Activated CD8-positive, alpha-beta memory T cell treated with anti-CD3 and anti-CD28 coated beads, Interleukin-2, amount 10 ng/mL, durations not matched to agents 7 days and 5 days (primary cell): ENCODE measurements at regions of chr1 and their contacts with region 1.

Region 1: DNA sequence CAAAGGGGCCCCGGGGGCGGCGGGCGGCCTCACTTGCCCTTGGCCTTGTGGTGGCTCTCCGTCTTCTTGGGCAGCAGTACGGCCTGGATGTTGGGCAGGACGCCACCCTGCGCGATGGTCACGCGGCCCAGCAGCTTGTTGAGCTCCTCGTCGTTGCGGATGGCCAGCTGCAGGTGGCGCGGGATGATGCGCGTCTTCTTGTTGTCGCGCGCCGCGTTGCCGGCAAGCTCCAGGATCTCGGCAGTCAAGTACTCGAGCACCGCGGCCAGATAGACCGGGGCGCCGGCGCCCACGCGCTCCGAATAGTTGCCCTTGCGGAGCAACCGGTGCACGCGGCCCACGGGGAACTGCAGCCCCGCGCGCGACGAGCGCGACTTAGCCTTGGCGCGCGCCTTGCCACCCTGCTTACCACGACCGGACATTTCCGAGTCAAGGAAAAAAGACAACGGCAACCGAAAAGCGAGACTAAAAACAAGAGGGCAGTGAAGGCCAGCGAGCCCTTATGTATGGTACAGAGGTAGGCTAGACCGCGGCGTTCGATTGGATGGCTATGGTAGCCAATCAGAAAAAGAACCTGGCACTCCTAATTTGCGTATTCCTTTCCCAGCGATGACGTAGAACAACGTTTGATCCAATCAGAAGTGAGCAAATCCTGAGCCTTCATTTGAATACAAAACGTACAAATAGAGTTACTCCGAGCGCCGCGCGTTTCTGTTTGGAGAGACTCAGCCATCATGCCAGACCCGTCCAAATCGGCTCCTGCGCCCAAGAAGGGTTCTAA is 29.6 kb upstream of the RNF187 start:
- DNase-seq: peak; percentile 95
- ATAC-seq: peak; percentile 83
- H3K4me3 Mint-ChIP-seq: peak overlapping the region; percentile 96
- H3K27ac Mint-ChIP-seq: peak overlapping the region; percentile 99
- H3K4me1 Mint-ChIP-seq: peaks cover 56% of the 10 kb centered on the region
- H3K27me3 Mint-ChIP-seq: no peaks in the 10 kb centered on the region

Region 2: DNA sequence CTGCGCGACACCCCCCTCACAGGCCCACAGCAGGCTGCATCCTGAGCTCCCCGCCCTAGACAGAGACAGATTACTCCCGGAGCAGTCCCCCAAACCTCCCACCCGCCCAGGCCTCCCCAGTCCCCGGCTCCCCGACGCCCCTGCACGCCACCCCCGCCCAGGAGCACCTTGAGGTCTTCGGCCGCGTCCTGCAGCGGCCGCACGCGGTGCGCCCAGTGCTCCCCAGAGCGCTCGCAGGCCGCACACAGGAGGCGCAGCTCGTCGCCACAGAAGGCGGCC is 51.7 kb before region 1 on chr1:
- CTCF ChIA-PET with region 1: interaction called, 44 read pairs
- DNase-seq: peak; percentile 52
- ATAC-seq: peak; percentile 14
- H3K4me3 Mint-ChIP-seq: peak overlapping the region; percentile 98
- H3K27ac Mint-ChIP-seq: peak overlapping the region; percentile 83
- H3K4me1 Mint-ChIP-seq: peaks cover 52% of the 10 kb centered on the region
- H3K27me3 Mint-ChIP-seq: no peaks in the 10 kb centered on the region

Region 3: DNA sequence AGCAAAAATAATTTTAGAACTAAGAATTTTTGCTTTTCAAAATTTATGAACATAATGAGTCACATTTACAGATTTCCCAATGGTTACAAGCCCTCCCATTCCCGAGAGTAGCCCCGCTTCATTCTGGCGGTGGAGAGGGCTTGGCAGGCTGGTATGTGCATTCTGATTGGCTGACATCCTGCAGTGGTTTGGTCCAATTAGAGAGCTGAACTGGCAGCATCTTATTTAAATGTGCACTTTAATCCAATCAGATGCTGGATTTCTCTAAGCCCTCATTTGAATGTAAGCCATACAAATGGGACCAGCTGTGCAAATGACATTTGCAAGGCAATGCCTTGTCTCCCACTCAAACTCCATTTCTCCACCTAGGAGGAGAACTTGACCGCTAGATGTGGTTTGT is 22.9 kb before region 1 on chr1:
- CTCF ChIA-PET with region 1: no interaction called
- DNase-seq: no peak
- ATAC-seq: no peak
- H3K4me3 Mint-ChIP-seq: no peak overlapping the region
- H3K27ac Mint-ChIP-seq: no peak overlapping the region
- H3K4me1 Mint-ChIP-seq: no peaks in the 10 kb centered on the region
- H3K27me3 Mint-ChIP-seq: peaks cover 38% of the 10 kb centered on the region

Region 4: DNA sequence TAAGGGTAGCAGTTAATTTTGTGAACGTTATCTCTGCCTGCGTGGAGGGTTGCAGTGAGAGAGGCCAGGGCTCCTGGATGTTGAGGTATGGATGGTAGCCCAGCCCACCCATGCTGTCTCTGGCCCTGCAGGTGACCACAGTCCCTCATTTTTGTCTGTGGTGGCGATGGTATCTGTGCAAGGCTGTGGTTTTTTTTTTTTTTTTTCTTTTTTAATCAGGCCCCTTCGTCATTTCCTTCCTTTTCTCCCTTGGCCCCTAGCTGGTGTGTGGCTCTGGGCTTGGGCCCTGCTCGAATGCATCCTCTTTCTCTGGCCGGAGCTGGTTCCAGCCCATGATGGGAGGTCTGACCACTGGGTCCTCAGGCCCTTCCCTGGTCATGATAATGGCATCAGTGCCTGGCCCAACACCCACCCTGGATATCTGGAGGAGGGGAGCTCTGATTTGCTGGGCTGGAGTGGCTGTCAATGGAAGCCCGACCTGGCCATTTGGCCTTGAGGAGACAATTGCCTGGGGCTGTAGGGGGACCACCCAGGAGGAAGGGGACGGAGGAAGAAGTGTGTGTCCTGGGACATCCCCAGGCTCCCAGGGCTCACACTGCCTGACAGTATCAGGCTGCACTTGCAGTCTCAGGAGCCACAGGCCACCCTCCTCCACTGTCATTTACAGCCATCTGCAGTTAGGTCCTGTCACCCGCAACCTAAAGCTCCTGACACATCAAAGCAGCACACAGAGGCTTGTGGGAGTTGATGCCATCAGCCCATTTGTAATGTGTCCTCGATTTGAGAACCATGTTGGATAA is 21.5 kb after region 1 on chr1:
- CTCF ChIA-PET with region 1: interaction called, 69 read pairs
- DNase-seq: peak; percentile 82
- ATAC-seq: peak; percentile 85
- H3K4me3 Mint-ChIP-seq: peak overlapping the region; percentile 66
- H3K27ac Mint-ChIP-seq: peak overlapping the region; percentile 98
- H3K4me1 Mint-ChIP-seq: peaks cover 75% of the 10 kb centered on the region
- H3K27me3 Mint-ChIP-seq: no peaks in the 10 kb centered on the region

Region 5: DNA sequence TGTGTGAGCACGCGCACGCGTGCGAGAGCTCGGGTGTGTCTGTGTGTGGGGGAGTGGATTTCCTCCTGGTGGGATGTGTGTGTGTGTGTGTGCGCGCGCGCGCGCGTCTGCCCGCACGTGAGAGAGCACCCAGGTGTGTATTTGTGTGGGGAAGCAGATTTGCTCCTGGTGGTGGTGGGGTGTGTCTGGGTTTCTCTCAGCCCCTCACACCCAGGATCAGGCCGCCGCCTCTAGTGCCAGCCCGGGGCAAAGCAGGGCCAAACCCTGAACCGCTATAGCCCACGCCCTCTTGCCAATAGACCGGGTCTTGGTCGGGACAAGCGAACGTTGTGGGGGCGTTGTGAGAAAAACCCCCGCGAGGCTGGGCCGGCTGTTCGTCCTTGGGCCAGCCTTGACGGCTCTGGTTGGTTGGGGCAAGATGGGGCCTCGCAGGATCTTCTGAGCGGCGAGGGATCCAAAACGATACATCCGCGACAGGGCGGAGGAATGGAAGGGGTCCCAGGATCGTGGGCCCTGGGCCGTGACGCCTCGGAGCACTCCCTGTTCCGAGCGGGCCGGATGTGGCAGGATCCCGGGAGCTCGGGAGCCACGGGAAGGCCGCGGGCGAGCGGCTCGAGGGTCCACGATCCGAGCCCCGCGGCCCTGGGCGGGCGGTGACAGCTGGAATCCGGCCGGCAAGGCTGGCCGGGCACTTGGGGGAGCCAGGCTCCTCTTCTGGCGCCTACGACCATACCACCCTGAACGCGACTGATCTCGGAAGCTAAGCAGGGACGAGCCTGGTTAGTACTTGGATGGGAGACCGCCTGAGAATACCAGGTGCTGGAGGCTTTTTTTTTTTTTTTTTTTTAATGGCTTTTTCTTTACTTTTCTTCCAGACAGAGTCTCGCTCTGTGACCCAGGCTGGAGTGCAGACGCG is 97.7 kb after region 1 on chr1:
- CTCF ChIA-PET with region 1: no interaction called
- DNase-seq: no peak
- ATAC-seq: no peak
- H3K4me3 Mint-ChIP-seq: no peak overlapping the region
- H3K27ac Mint-ChIP-seq: no peak overlapping the region
- H3K4me1 Mint-ChIP-seq: no peaks in the 10 kb centered on the region
- H3K27me3 Mint-ChIP-seq: no peaks in the 10 kb centered on the region